H1 (cell line): ENCODE measurements at regions of chr2 and their contacts with region 1.

Region 1: GRCh38 chr2:2688254-2688653 is 357.2 kb upstream of the MYT1L start:
- DNase-seq: no peak
- H3K4me3 ChIP-seq: no peak overlapping the region
- H3K27ac ChIP-seq: no peak overlapping the region
- H3K4me1 ChIP-seq: no peaks in the 10 kb centered on the region
- H3K27me3 ChIP-seq: no peaks in the 10 kb centered on the region; a peak in 1 of 7 replicates
- CTCF ChIP-seq: no peak
- EP300 ChIP-seq: no peak
- POLR2A ChIP-seq: no peak
- RAD21 ChIP-seq: no peak

Region 2: GRCh38 chr2:2016651-2017311 is 671.5 kb before region 1 on chr2:
- CTCF ChIA-PET with region 1: no interaction called
- POLR2A ChIA-PET with region 1: no interaction called
- DNase-seq: no peak
- H3K4me3 ChIP-seq: no peak overlapping the region
- H3K27ac ChIP-seq: no peak overlapping the region
- H3K4me1 ChIP-seq: peaks cover 0 to 10% (median 7%) of the 10 kb centered on the region in 4 experiments; a peak in 6 of 7 replicates
- H3K27me3 ChIP-seq: peaks cover 0 to 3% (median 0%) of the 10 kb centered on the region in 4 experiments; a peak in 1 of 7 replicates
- CTCF ChIP-seq: no peak
- EP300 ChIP-seq: no peak
- POLR2A ChIP-seq: no peak
- RAD21 ChIP-seq: no peak

Region 3: DNA sequence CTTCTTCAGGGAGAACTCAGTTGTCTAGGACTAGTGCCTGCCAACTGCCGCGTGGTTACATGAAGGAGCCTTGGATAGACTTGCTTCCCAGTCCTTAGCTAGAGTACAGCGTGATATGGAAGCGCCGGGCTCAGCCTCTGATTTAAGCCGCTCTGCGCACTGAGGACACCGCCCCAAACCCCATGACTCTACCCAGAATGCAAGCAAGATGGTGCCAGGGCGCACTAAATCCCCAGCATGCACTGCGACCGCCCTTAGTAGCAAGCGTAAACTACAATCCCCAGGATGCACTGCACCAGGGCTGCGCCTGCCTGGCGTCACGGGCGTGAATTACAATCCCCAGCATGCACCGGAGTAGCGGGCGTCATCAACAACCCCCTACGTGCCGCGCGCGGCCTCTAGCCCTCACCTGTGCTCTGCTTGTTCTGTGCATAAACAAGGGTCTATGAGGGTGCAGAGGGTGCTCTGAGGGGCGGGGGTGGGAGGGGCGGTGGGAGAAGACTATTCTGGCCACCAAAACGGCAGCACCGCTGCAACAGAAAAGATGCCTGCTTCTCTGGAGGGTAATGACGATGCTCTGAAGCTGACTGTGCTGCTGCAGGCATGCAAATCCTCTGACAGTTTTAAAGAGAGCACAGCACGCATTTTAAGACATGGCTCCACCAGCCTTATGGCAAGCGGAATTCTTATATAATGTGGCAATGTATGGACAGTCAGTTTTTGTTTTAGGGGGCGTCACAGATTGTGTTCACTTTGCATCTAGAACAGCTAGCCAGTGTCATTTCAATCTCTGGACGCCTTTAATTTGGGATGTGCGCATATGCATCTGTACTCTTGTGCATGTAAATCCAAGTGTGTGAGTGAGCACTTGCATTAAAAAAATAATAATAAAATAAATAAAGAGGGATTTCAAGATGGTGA is 74.7 kb before region 1 on chr2:
- CTCF ChIA-PET with region 1: no interaction called
- POLR2A ChIA-PET with region 1: no interaction called
- DNase-seq: peak; percentile 85 to 90
- H3K4me3 ChIP-seq: peak overlapping the region; percentile 2 to 57 (median 20); a peak in 7 of 8 replicates
- H3K27ac ChIP-seq: no peak overlapping the region; the same call in 1 of the 2 replicates
- H3K4me1 ChIP-seq: no peaks in the 10 kb centered on the region
- H3K27me3 ChIP-seq: peaks cover 0 to 3% (median 0%) of the 10 kb centered on the region in 4 experiments; a peak in 1 of 7 replicates
- CTCF ChIP-seq: no peak
- EP300 ChIP-seq: no peak
- POLR2A ChIP-seq: peak; percentile 17 to 65
- RAD21 ChIP-seq: 0 out of 4 replicates have a peak, but pooled peaks have one; percentile 2 to 7

Region 4: GRCh38 chr2:2698182-2699120 is 10.2 kb after region 1 on chr2:
- CTCF ChIA-PET with region 1: interaction called, 12 read pairs
- POLR2A ChIA-PET with region 1: no interaction called
- DNase-seq: no peak
- H3K4me3 ChIP-seq: no peak overlapping the region
- H3K27ac ChIP-seq: no peak overlapping the region
- H3K4me1 ChIP-seq: peaks cover 0 to 13% (median 6%) of the 10 kb centered on the region in 4 experiments; a peak in 4 of 7 replicates
- H3K27me3 ChIP-seq: no peaks in the 10 kb centered on the region
- CTCF ChIP-seq: peak; percentile 17 to 62 (median 56); a peak in 3 of 4 replicates
- EP300 ChIP-seq: no peak
- POLR2A ChIP-seq: no peak
- RAD21 ChIP-seq: peak; percentile 44 to 46

Region 5: GRCh38 chr2:2787301-2787907 is 99.2 kb after region 1 on chr2:
- CTCF ChIA-PET with region 1: no interaction called
- POLR2A ChIA-PET with region 1: no interaction called
- DNase-seq: no peak
- H3K4me3 ChIP-seq: peak overlapping the region in 1 of 4 experiments; percentile 7; a peak in 1 of 8 replicates
- H3K27ac ChIP-seq: no peak overlapping the region
- H3K4me1 ChIP-seq: peaks cover 5 to 18% (median 8%) of the 10 kb centered on the region in 4 experiments
- H3K27me3 ChIP-seq: no peaks in the 10 kb centered on the region
- CTCF ChIP-seq: no peak
- EP300 ChIP-seq: no peak
- POLR2A ChIP-seq: no peak
- RAD21 ChIP-seq: no peak

Region 6: GRCh38 chr2:3073041-3073595 is 384.9 kb after region 1 on chr2:
- CTCF ChIA-PET with region 1: no interaction called
- POLR2A ChIA-PET with region 1: no interaction called
- DNase-seq: no peak
- H3K4me3 ChIP-seq: no peak overlapping the region
- H3K27ac ChIP-seq: no peak overlapping the region
- H3K4me1 ChIP-seq: peaks cover 0 to 3% (median under 1%) of the 10 kb centered on the region in 4 experiments; a peak in 2 of 7 replicates
- H3K27me3 ChIP-seq: no peaks in the 10 kb centered on the region
- CTCF ChIP-seq: no peak
- EP300 ChIP-seq: no peak
- POLR2A ChIP-seq: no peak
- RAD21 ChIP-seq: no peak